ENCODE measurements at regions of chr2 and their contacts with region 1.

Region 1: DNA sequence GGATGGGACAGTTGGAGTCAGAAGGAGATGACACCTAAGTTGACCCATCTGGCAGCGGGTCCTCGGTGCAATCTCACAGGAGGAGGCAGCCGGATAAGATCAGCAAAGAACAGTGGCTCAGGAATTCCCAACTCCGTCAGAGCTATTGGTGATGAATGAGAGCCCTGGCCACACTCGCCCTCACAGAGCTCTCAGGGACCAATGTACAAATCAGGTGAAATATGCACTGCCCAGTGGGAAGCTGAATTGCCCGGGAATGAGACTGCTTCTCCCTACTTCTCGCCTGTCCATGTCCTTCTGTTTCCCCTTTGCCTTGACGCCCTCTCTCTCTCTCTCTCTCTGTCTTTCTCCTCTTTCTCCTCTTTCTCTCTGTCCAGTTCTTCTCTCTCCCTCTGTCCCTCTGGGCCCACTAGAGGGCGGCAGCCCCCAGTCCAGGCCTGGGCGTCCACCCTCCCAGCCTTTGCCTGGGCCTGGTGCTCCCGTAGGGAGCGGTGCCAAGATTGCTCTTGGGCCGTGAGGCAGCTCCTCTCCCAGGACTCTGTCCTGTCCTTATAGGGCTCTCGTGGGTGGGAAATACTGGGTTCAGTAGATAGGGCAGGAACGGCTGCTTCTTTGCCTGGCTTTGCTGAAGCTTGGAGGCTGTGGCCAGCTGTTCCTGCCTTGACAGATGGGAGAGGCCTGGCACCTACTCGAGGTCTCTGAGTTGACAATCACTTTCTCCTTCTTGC is 28.3 kb upstream of the PUM2 start:
- DNase-seq: peak; percentile 58
- H3K4me3 ChIP-seq: no peak overlapping the region
- H3K27me3 ChIP-seq: no peaks in the 10 kb centered on the region
- CTCF ChIP-seq: peak; percentile 97

Region 2: GRCh38 chr2:20365249-20365817 is 13.6 kb before region 1 on chr2:
- CTCF ChIA-PET with region 1: interaction called, 26 read pairs
- POLR2A ChIA-PET with region 1: no interaction called
- DNase-seq: no peak
- H3K4me3 ChIP-seq: no peak overlapping the region
- H3K27me3 ChIP-seq: peaks cover 3% of the 10 kb centered on the region; the same call in 1 of the 2 replicates
- CTCF ChIP-seq: no peak

Region 3: DNA sequence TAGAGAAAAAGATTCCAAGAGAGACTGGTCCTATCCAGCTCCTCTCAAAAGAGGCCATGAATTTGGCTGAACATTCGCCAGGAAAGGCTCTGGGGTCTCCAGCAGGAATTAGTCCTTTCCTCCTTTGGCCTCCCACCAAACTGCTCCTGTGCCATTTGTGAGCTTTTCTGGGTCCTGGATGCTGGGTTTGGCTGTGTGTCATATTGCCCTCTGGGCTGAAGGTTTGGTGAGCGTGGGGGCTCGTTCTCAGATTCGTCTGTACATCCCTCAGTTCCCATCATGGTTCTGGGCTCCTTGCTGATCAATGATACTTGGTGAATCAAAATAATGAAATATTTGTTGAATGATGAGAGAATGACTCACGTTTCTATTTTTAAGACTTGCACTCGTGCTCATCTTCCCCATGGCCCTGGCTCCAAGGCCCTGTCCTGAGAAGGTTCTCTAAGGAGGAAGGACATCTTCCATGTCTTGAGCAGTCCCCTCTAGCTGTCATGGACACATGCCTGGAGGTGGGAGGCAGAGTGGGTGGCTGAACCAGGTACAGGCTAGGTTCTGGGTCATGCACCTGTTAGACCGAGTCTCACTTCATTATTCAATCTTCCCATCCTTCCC is 20.1 kb after region 1 on chr2:
- CTCF ChIA-PET with region 1: interaction called, 20 read pairs
- POLR2A ChIA-PET with region 1: interaction called, 6 read pairs
- DNase-seq: no peak
- H3K4me3 ChIP-seq: no peak overlapping the region
- H3K27me3 ChIP-seq: peaks cover 5% of the 10 kb centered on the region
- CTCF ChIP-seq: no peak

Region 4: GRCh38 chr2:20419007-20419576 is 40.1 kb after region 1 on chr2:
- CTCF ChIA-PET with region 1: interaction called, 19 read pairs
- POLR2A ChIA-PET with region 1: no interaction called
- DNase-seq: no peak
- H3K4me3 ChIP-seq: no peak overlapping the region
- H3K27me3 ChIP-seq: peaks cover 15% of the 10 kb centered on the region
- CTCF ChIP-seq: no peak

Region 5: DNA sequence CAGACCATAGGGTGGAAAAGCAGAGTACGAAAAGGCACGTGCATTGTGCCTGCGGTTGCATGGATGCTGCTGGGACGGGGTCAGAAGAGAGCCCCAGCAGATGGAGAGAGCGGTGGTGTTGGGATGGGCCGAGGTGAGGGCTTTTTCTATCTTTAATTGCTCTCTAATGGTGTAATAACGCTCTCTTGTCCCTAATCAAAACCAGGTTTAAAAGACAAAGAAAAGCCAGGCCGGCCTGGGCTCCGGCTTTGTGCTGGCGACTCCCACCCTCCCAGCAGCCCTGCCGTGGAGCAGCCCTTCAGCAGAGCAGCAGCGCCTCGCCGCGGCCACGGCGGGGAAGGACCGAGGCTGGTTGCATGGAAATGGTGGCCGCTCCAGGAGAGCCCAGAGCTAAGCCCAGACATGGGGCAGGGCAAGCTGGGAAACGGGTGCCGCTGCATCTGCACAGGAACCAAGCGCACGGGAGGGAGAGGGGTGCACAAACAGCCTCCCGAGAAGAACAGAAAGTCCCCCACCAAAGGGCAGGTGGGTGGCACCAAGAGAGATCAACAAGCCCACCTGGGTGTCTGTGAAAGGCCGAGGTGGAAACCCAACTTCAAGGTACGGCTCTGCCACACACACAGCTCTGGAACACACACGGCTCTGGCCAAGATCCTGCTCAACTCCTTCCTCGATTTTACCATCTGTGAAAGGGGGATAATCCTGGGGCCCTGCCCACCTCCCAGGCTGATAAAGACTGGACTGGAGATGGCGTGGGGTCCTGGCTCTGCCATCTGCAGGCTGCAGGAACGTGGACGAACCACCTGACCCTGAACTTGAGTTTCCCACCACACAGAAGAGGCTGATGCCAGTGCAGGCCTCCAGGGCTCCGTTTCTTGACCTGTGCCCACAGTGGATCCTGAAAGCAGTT is 257.0 kb after region 1 on chr2:
- CTCF ChIA-PET with region 1: interaction called, 77 read pairs
- POLR2A ChIA-PET with region 1: no interaction called
- DNase-seq: no peak
- H3K4me3 ChIP-seq: no peak overlapping the region
- H3K27me3 ChIP-seq: no peaks in the 10 kb centered on the region; the same call in 1 of the 2 replicates
- CTCF ChIP-seq: peak; percentile 97